AG04449 (cell line): ENCODE measurements at regions of chr16 and their contacts with region 1.

Region 1: GRCh38 chr16:3282730-3283524 is at the start of gene ZNF263:
- DNase-seq: peak; percentile 94
- H3K4me3 ChIP-seq: peak within 1 kb of the TSS; percentile 92
- CTCF ChIP-seq: no peak

Region 2: GRCh38 chr16:3143612-3144320 is 139.2 kb before region 1 on chr16:
- CTCF ChIA-PET with region 1: no interaction called
- POLR2A ChIA-PET with region 1: no interaction called
- DNase-seq: no peak
- H3K4me3 ChIP-seq: no peak overlapping the region
- CTCF ChIP-seq: no peak

Region 3: DNA sequence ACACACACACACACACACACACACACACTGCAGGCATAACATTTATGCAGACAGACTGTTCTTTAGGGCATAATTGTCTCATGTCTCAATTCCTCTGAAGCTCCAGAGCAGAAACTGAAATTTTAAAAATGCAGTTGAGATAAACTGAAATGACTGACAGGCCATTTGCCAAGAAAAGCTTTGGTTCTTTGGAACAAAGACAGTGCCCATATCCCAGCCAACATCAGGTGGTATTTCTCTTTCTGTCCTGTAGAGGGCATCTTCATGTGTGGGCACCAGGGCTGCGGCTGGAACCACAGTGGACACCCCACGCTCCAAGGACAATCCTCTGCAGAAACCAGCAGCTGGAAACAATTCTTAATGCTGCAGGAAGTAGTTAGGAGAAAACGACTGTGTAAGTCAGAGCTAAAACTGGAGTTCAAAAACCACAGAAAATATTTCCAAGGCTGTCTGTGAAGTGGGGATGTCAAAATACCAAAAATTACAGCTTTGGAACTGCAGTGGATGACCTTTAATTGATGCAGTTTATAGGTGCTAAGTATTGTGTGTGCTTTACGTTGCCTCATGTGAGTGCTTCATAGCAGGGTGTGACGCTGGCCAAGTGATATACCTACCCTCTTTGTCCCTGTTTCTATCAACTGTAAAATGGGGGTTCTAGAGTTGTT is 15.9 kb before region 1 on chr16:
- CTCF ChIA-PET with region 1: interaction called, 47 read pairs
- POLR2A ChIA-PET with region 1: interaction called, 10 read pairs
- DNase-seq: peak; percentile 31
- H3K4me3 ChIP-seq: no peak overlapping the region
- CTCF ChIP-seq: peak; percentile 65

Region 4: GRCh38 chr16:3305109-3306068 is 22.5 kb after region 1 on chr16 and contains the starts of genes TIGD7 and ZNF75A:
- CTCF ChIA-PET with region 1: interaction called, 3 read pairs
- POLR2A ChIA-PET with region 1: interaction called, 11 read pairs
- DNase-seq: peak; percentile 45
- H3K4me3 ChIP-seq: peak within 1 kb of the TSS; percentile 92
- CTCF ChIP-seq: peak; percentile 8